ENCODE measurements at regions of chr6 and their contacts with region 1.

Region 1: DNA sequence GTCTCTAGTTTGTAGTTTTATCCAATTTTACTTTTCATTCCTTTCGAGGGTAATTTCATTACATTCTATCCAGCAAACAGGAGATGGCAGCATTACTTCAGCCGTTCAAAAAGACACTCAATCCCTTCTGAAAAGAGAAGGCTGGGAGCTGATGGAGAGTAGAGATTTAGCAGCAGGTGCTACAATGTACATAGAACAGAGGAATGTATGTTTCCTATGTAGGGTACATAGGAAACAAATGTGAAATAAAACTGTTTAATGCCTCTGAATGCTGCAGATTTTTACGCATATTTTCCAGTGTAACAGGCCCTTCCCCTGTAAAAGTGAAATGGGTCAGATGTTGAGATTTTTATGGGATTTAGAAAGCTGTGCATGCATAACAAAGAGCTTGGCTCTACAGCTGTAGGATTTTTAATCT is 16.0 kb downstream of the RPS12 start:
- DNase-seq: peak in 1 of 4 experiments; percentile 35
- ATAC-seq: peak; percentile 73
- H3K4me3 ChIP-seq: no peak overlapping the region
- H3K27ac ChIP-seq: no peak overlapping the region
- H3K4me1 ChIP-seq: no peaks in the 10 kb centered on the region; a peak in 1 of 5 replicates
- H3K27me3 ChIP-seq: no peaks in the 10 kb centered on the region
- CTCF ChIP-seq: peak; percentile 32 to 68 (median 41); a peak in 3 of 6 replicates
- EP300 ChIP-seq: no peak
- POLR2A ChIP-seq: no peak
- RAD21 ChIP-seq: peak; percentile 80 to 81

Region 2: DNA sequence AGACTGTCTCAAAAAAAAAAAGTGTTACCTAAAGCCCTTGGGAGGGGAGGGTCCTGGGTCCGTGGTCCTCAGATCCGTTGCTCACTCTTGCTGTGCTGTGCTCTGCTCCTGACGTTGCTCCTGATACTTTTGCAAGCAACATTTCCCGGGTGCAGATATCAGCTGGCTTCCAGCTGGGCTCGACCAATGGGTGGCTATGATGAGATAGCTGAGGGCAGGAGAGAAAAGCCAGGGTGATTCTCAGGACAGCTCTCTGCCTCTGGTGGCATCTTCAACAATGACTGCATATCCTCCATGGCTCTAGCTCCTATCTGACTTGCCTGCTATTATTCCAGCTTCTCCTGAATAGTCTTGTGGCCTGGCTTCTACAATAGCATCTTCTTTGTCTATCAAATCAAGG is 118.5 kb after region 1 on chr6:
- CTCF ChIA-PET with region 1: no interaction called
- POLR2A ChIA-PET with region 1: no interaction called
- in situ Hi-C with region 1: no loop called
- intact Hi-C with region 1: loop called (anchors 5 kb)
- DNase-seq: no peak
- ATAC-seq: no peak; the same call in 2 of the 3 replicates
- H3K4me3 ChIP-seq: no peak overlapping the region
- H3K27ac ChIP-seq: no peak overlapping the region
- H3K4me1 ChIP-seq: no peaks in the 10 kb centered on the region
- H3K27me3 ChIP-seq: 0 out of 5 replicates have a peak, but pooled peaks cover 0 to 5% of the 10 kb centered on the region in 2 experiments
- CTCF ChIP-seq: no peak
- EP300 ChIP-seq: no peak
- POLR2A ChIP-seq: no peak
- RAD21 ChIP-seq: no peak

Region 3: DNA sequence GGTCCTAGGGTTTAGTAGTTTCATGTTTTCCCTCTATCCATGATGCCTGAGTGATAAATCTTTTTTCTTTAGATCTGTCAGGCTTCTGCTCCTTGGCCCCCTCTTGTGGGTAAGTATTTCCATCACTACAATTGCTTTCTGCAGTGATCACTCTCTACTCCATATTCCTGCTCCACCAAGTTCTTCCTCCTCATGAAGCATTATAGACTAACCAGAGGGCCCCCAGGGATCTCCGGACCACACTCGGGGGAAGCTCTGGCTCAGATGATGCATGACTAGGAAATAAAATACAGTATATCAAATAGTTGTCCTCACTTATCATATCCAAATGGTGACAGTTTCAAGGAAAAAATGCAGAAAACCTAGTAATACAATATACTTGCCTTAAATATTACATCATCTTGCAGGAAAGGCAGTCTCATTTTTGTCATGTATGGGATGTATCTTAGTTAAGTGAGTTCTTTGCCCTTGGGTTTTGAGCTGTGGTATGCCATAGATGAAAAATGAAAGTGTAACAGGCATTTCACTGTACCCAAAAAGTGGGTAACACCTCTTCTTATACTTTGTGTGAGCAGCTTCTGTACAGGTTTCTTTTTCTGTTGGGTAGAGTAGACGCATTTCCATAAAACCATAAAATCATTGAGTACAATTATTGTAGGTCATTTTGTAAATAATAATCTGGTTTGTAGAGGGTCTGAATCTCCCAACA is 209.9 kb after region 1 on chr6:
- CTCF ChIA-PET with region 1: no interaction called
- POLR2A ChIA-PET with region 1: no interaction called
- in situ Hi-C with region 1: no loop called
- intact Hi-C with region 1: loop called (anchors 2 kb)
- DNase-seq: peak in 2 of 4 experiments; percentile 8 to 20
- ATAC-seq: peak; percentile 75
- H3K4me3 ChIP-seq: no peak overlapping the region
- H3K27ac ChIP-seq: no peak overlapping the region
- H3K4me1 ChIP-seq: no peaks in the 10 kb centered on the region
- H3K27me3 ChIP-seq: no peaks in the 10 kb centered on the region
- CTCF ChIP-seq: peak; percentile 21 to 43 (median 38); a peak in 3 of 6 replicates
- EP300 ChIP-seq: no peak
- POLR2A ChIP-seq: no peak
- RAD21 ChIP-seq: peak; percentile 13 to 38; a peak in 2 of 4 replicates

Region 4: GRCh38 chr6:133170600-133170999 is 340.3 kb after region 1 on chr6:
- CTCF ChIA-PET with region 1: no interaction called
- POLR2A ChIA-PET with region 1: no interaction called
- in situ Hi-C with region 1: no loop called
- intact Hi-C with region 1: no loop called
- DNase-seq: no peak
- ATAC-seq: no peak
- H3K4me3 ChIP-seq: no peak overlapping the region
- H3K27ac ChIP-seq: no peak overlapping the region
- H3K4me1 ChIP-seq: no peaks in the 10 kb centered on the region
- H3K27me3 ChIP-seq: no peaks in the 10 kb centered on the region
- CTCF ChIP-seq: no peak
- EP300 ChIP-seq: no peak
- POLR2A ChIP-seq: no peak
- RAD21 ChIP-seq: no peak

Region 5: GRCh38 chr6:133553652-133554051 is 723.3 kb after region 1 on chr6:
- CTCF ChIA-PET with region 1: interaction called, 11 read pairs
- POLR2A ChIA-PET with region 1: no interaction called
- in situ Hi-C with region 1: loop called (anchors 10 kb)
- intact Hi-C with region 1: loop called (anchors 2 kb)
- DNase-seq: peak; percentile 15 to 59 (median 26)
- ATAC-seq: peak; percentile 92
- H3K4me3 ChIP-seq: no peak overlapping the region
- H3K27ac ChIP-seq: no peak overlapping the region
- H3K4me1 ChIP-seq: no peaks in the 10 kb centered on the region
- H3K27me3 ChIP-seq: no peaks in the 10 kb centered on the region
- CTCF ChIP-seq: peak; percentile 51 to 72 (median 53); a peak in 4 of 6 replicates
- EP300 ChIP-seq: no peak
- POLR2A ChIP-seq: no peak
- RAD21 ChIP-seq: peak; percentile 74 to 76